Activated T-helper 2 cell treated with anti-CD3 and anti-CD28 coated beads, Interferon-gamma antibody, Interleukin-2, Interleukin-4, amounts not matched to agents 10 μg/mL and 5 μg/mL and 100 μg/mL, durations not matched to agents 14 hours and 24 hours and 36 hours (primary cell): ENCODE measurements at regions of chr2 and their contacts with region 1.

Region 1: GRCh38 chr2:174341286-174341994 is 6.7 kb downstream of the SP9 start:
- DNase-seq: peak; percentile 82
- H3K4me3 Mint-ChIP-seq: peak overlapping the region; percentile 72
- H3K27ac Mint-ChIP-seq: peak overlapping the region; percentile 77
- H3K4me1 Mint-ChIP-seq: peaks cover 29% of the 10 kb centered on the region
- H3K27me3 Mint-ChIP-seq: peaks cover 61% of the 10 kb centered on the region

Region 2: GRCh38 chr2:173402405-173402974 is 939.0 kb before region 1 on chr2:
- intact Hi-C with region 1: loop called (anchors 1 kb)
- DNase-seq: peak; percentile 58
- H3K4me3 Mint-ChIP-seq: no peak overlapping the region
- H3K27ac Mint-ChIP-seq: no peak overlapping the region
- H3K4me1 Mint-ChIP-seq: peaks cover 6% of the 10 kb centered on the region
- H3K27me3 Mint-ChIP-seq: peaks cover 63% of the 10 kb centered on the region

Region 3: DNA sequence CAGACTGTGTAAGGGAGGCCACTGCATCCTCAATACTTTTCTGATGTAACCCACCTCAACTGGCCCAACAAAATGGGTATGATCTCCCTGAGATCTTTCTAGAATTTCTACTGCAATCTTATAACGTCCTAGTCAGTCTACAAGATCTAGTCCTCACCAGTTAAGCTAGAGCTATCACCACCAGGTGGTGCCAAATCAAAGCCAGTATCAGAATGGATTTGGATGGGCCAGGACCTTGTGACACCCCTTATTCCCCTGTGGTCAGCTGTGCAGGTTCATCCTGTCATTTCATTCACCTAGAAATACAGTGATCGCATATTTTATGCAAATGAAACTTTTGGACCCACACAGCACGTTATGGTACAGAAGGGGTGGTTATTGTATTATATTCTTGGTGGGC is 183.4 kb before region 1 on chr2:
- intact Hi-C with region 1: loop called (anchors 10 kb)
- DNase-seq: peak; percentile 12
- H3K4me3 Mint-ChIP-seq: no peak overlapping the region
- H3K27ac Mint-ChIP-seq: no peak overlapping the region
- H3K4me1 Mint-ChIP-seq: peaks cover 10% of the 10 kb centered on the region
- H3K27me3 Mint-ChIP-seq: no peaks in the 10 kb centered on the region

Region 4: GRCh38 chr2:174326161-174327020 is 15.0 kb before region 1 on chr2:
- intact Hi-C with region 1: loop called (anchors 2 kb)
- DNase-seq: no peak
- H3K4me3 Mint-ChIP-seq: peak overlapping the region; percentile 55
- H3K27ac Mint-ChIP-seq: no peak overlapping the region
- H3K4me1 Mint-ChIP-seq: peaks cover 18% of the 10 kb centered on the region
- H3K27me3 Mint-ChIP-seq: peaks cover 86% of the 10 kb centered on the region

Region 5: GRCh38 chr2:174383796-174384195 is 42.4 kb after region 1 on chr2:
- intact Hi-C with region 1: no loop called
- DNase-seq: no peak
- H3K4me3 Mint-ChIP-seq: no peak overlapping the region
- H3K27ac Mint-ChIP-seq: no peak overlapping the region
- H3K4me1 Mint-ChIP-seq: peaks cover 4% of the 10 kb centered on the region
- H3K27me3 Mint-ChIP-seq: no peaks in the 10 kb centered on the region

Region 6: GRCh38 chr2:174399171-174399570 is 57.7 kb after region 1 on chr2:
- intact Hi-C with region 1: no loop called
- DNase-seq: no peak
- H3K4me3 Mint-ChIP-seq: no peak overlapping the region
- H3K27ac Mint-ChIP-seq: no peak overlapping the region
- H3K4me1 Mint-ChIP-seq: peaks cover 12% of the 10 kb centered on the region
- H3K27me3 Mint-ChIP-seq: no peaks in the 10 kb centered on the region

Region 7: DNA sequence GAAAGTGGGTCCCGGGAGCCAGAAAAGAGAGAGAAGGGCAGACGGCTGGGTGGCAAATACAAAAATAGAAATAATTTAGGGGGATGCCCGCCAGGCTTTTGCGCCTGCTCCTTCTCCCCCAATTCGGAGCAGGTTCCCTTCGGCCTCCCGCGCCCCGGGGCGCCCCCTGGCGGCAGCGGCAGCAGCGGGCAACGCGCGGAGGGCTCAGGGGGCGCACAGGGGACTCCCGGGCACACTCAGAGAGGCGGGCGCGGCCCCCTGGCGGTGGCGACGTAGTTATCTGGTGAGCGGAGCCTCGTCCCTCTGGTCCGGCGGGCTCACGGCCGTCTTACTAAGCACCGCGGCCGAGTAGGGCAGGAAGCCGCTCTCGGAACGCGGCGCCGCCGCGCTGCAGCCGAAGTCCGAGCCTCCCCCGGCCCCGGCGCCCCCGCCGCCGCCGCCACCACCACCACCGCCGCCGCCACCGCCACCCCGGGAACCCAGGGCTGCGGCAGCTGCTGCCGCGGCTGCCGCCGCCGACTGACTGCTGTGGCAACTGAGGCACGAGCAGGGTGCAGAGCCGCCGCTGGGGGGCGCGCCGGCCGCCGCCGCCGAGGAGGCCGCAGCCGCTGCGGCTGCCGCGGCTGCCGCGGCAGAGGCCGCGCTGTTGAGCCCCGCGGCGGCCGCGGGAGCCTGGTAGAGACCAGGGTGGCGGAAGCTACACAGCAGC is 1738.5 kb after region 1 on chr2:
- intact Hi-C with region 1: loop called (anchors 5 kb)
- DNase-seq: no peak
- H3K4me3 Mint-ChIP-seq: no peak overlapping the region
- H3K27ac Mint-ChIP-seq: peak overlapping the region; percentile 76
- H3K4me1 Mint-ChIP-seq: peaks cover 5% of the 10 kb centered on the region
- H3K27me3 Mint-ChIP-seq: peaks cover 69% of the 10 kb centered on the region

Region 8: GRCh38 chr2:176161819-176162626 is 1820.6 kb after region 1 on chr2:
- intact Hi-C with region 1: loop called (anchors 5 kb)
- DNase-seq: no peak
- H3K4me3 Mint-ChIP-seq: no peak overlapping the region
- H3K27ac Mint-ChIP-seq: no peak overlapping the region
- H3K4me1 Mint-ChIP-seq: no peaks in the 10 kb centered on the region
- H3K27me3 Mint-ChIP-seq: peaks cover 88% of the 10 kb centered on the region